MCF 10A (cell line): ENCODE measurements at regions of chr12 and their contacts with region 1.

Region 1: GRCh38 chr12:95532851-95533250 is 18.4 kb downstream of the USP44 start:
- DNase-seq: no peak
- H3K4me3 Mint-ChIP-seq: no peak overlapping the region
- H3K27ac Mint-ChIP-seq: no peak overlapping the region
- H3K4me1 Mint-ChIP-seq: peaks cover 18% of the 10 kb centered on the region
- H3K27me3 Mint-ChIP-seq: no peaks in the 10 kb centered on the region
- CTCF ChIP-seq: no peak

Region 2: DNA sequence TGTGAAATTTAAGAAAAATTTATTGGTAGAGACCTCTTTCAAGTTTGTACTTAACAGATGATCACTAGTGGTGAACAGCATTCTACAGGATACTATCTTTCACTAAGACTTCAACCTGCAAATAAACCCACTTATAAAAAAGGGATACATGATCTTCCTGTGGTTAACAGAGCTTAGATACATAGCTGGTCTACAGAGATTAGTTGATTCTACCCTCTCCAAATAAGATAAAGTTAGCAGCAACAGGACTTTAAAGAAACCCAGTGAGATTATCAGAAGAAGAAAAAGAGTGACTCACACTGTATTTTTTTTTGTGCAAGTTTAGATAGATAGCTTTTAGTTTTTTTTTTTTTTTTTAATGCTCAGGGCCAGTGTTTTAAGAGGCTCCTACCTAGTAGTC is 16.1 kb before region 1 on chr12:
- CTCF ChIA-PET with region 1: interaction called, 15 read pairs
- POLR2A ChIA-PET with region 1: interaction called, 3 read pairs
- intact Hi-C with region 1: no loop called
- DNase-seq: no peak
- H3K4me3 Mint-ChIP-seq: no peak overlapping the region
- H3K27ac Mint-ChIP-seq: no peak overlapping the region
- H3K4me1 Mint-ChIP-seq: no peaks in the 10 kb centered on the region
- H3K27me3 Mint-ChIP-seq: no peaks in the 10 kb centered on the region
- CTCF ChIP-seq: no peak